Endothelial cell of umbilical vein (primary cell): ENCODE measurements at regions of chr20 and their contacts with region 1.

Region 1: DNA sequence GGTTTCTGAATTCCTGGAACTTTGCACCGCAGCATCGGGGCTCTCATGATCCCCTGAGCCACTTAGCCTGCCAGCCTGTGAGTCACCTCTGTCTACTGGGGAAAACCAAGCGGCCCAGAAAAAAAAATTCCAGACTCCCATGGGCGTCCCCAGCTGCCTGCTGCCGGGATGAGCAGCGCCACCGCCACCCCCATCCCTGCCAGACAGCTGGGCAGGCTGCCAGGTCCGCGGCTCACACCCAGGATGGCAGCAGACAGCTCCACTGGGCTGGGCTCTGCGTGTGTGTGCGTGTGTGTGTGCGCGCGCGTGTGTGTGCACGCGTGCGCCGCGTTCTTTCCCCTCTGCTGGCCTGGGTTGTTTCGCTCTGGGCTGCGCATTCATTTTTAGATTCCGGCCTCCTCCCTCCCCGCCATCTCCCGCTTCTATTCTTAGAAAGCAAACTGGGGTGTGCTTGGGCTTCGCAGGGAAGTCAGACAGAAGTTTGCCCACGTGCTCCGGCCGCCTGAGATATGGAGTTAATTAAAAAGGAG is 38.9 kb upstream of the PMEPA1 start:
- DNase-seq: peak; percentile 80
- H3K4me3 ChIP-seq: peak overlapping the region in 2 of 3 experiments; percentile 12 to 24
- H3K27ac ChIP-seq: peak overlapping the region; percentile 96
- H3K4me1 ChIP-seq: peaks cover 29% of the 10 kb centered on the region
- H3K27me3 ChIP-seq: no peaks in the 10 kb centered on the region
- CTCF ChIP-seq: no peak
- POLR2A ChIP-seq: no peak

Region 2: DNA sequence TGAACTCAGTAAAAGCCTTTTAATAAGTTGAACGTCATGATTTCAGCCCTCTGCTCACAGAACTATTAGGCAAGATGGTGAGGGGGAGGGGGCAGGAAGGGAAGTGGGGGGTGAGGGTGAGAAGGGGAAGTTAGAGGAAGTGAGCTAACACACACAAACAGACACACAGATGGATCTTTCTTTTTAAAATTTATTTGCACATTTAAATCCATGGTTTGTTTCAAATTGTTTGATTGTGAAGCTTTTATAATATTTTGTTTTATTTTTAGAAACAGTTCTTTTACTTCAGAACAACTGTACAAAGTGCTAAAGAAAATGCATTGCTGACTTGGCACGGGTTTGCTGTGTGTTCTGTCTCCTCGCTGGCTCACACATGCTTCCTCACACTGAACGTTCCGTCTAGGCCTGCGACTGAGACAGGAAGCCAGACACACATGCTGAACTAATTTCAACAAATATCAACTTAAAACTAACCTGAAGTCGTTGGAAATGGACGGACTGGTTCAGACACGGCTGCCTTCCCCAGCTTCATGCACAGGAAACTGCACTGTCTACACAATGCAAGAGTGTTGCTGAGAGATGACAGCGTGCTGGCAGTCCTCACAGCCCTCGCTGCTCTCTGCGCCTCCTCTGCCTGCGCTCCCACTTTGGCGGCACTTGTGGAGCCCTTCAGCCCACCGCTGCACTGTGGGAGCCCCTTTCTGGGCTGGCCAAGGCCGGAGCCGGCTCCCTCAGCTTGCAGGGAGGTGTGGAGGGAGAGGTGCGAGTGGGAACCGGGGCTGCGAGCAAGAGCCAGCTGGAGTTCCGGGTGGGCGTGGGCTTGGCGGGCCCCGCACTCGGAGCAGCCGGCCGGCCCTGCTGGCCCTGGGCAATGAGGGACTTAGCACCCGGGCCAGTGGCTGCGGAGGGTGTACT is 120.4 kb before region 1 on chr20:
- CTCF ChIA-PET with region 1: no interaction called
- POLR2A ChIA-PET with region 1: no interaction called
- dilution Hi-C with region 1: no loop called
- intact Hi-C with region 1: loop called (anchors 1 kb)
- DNase-seq: peak; percentile 86
- H3K4me3 ChIP-seq: no peak overlapping the region
- H3K27ac ChIP-seq: peak overlapping the region; percentile 61
- H3K4me1 ChIP-seq: peaks cover 8% of the 10 kb centered on the region
- H3K27me3 ChIP-seq: peaks cover 6% of the 10 kb centered on the region in 2 experiments
- CTCF ChIP-seq: no peak
- POLR2A ChIP-seq: no peak

Region 3: GRCh38 chr20:57698117-57698866 is 50.4 kb before region 1 on chr20:
- CTCF ChIA-PET with region 1: interaction called, 4 read pairs
- POLR2A ChIA-PET with region 1: interaction called, 4 read pairs
- dilution Hi-C with region 1: no loop called
- intact Hi-C with region 1: loop called (anchors 1 kb)
- DNase-seq: peak; percentile 99
- H3K4me3 ChIP-seq: peak overlapping the region in 1 of 3 experiments; percentile 25
- H3K27ac ChIP-seq: peak overlapping the region; percentile 80
- H3K4me1 ChIP-seq: peaks cover 30% of the 10 kb centered on the region
- H3K27me3 ChIP-seq: no peaks in the 10 kb centered on the region
- CTCF ChIP-seq: no peak
- POLR2A ChIP-seq: peak; percentile 68

Region 4: DNA sequence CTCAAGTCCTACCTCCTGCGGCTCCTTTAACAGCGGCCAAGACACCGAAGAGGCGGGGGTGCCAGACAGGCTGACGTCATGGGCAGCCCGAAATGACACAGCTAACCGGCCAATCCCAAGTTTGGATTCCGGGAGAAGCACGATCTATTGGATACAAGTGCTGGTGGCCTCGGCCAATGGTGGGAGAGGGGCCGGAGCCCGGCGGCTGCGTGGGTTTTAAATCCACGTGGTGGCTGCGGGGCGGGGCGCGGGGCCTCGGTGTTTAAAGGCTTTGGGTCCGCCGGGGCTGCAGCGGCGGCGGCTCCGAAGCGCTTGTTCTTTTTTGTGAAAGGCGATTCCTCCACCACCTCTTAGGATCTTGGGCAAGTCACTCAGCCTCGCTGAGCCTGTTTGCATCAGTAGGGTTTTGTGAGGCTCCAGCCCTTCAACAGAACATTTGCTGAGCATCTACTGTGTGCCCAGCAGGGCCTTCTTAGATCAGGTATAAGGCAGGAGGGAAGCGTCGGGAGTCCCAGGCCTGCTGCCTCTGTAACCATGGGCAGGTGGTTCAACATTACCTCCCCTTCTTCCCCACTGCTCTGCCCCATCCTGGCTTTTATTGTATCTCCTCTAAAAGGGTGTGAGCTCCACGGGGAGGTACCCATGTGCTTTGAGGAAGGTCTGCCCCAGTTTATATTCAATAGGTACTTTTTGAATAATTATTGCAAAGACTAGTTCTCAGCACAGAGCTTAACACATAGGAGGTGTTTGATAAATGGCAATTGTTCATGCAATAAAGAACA is 30.0 kb before region 1 on chr20:
- CTCF ChIA-PET with region 1: no interaction called
- POLR2A ChIA-PET with region 1: no interaction called
- dilution Hi-C with region 1: no loop called
- intact Hi-C with region 1: loop called (anchors 1 kb)
- DNase-seq: peak; percentile 97
- H3K4me3 ChIP-seq: peak overlapping the region in 1 of 3 experiments; percentile 11
- H3K27ac ChIP-seq: no peak overlapping the region
- H3K4me1 ChIP-seq: peaks cover 4% of the 10 kb centered on the region
- H3K27me3 ChIP-seq: peaks cover 2 to 11% of the 10 kb centered on the region in 2 experiments
- CTCF ChIP-seq: no peak
- POLR2A ChIP-seq: no peak

Region 5: DNA sequence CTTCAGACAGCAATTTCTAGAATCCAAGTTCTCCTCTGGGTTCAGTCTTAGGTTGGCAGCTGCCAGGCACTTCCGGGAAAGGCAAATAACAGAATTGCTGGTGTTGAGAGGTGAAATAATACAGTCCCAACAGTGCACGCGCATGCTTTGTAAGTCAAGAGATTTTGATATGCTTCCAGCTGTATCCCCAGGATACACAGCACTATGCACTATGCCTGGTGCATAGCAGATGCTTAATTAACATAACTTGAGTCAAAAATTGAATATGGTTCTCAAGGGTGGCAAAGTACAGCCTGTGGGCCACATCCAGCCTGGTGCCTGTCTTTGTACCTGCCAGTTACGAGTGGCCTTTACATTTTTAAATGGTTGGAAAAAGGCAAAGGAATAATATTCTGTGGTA is 19.9 kb before region 1 on chr20:
- CTCF ChIA-PET with region 1: no interaction called
- POLR2A ChIA-PET with region 1: no interaction called
- dilution Hi-C with region 1: no loop called
- intact Hi-C with region 1: no loop called
- DNase-seq: no peak
- H3K4me3 ChIP-seq: no peak overlapping the region
- H3K27ac ChIP-seq: no peak overlapping the region
- H3K4me1 ChIP-seq: no peaks in the 10 kb centered on the region
- H3K27me3 ChIP-seq: peaks cover 7 to 27% of the 10 kb centered on the region in 2 experiments
- CTCF ChIP-seq: no peak
- POLR2A ChIP-seq: no peak

Region 6: DNA sequence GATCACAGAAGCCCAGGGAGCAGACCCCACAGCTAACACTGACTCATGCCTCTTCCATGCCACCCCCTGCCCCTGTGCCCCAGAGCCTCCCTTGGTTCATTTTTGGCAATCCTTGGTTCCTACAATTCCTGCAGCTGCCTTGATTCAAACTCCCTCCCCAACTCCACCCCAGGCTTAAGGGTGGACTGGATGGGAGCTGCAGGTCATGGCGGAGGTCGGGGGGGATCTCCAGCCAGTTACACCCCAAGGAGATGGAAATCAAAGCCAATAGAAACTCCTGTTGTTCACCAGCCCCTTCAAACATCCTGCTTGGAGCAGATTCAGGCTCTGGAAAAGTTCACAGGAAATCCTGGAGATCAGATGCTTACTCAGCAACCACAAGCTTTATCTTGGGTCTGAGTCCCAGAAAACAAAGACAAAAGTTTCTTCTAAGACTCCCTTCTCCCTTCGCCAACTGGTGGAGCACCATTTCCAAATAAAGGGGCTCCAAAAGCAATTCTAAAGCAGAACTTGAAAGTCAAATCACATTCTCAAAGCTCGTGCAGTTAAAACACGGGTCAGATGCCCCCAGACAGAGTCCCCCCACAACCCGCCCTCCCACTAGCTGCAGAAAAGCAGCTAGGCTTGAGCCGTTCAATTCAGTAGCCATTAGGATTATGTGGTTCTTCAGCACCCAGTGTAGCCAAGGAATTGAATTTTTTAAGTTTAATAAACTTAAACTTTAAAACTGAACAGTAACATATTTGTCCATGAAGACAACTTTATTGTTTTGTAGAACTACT is 330.3 kb after region 1 on chr20:
- CTCF ChIA-PET with region 1: no interaction called
- POLR2A ChIA-PET with region 1: no interaction called
- dilution Hi-C with region 1: no loop called
- intact Hi-C with region 1: loop called (anchors 1 kb)
- DNase-seq: peak; percentile 71
- H3K4me3 ChIP-seq: no peak overlapping the region
- H3K27ac ChIP-seq: peak overlapping the region; percentile 22
- H3K4me1 ChIP-seq: peaks cover 45% of the 10 kb centered on the region
- H3K27me3 ChIP-seq: no peaks in the 10 kb centered on the region
- CTCF ChIP-seq: no peak
- POLR2A ChIP-seq: no peak